ENCODE measurements at regions of chr4 and their contacts with region 1.

Region 1: DNA sequence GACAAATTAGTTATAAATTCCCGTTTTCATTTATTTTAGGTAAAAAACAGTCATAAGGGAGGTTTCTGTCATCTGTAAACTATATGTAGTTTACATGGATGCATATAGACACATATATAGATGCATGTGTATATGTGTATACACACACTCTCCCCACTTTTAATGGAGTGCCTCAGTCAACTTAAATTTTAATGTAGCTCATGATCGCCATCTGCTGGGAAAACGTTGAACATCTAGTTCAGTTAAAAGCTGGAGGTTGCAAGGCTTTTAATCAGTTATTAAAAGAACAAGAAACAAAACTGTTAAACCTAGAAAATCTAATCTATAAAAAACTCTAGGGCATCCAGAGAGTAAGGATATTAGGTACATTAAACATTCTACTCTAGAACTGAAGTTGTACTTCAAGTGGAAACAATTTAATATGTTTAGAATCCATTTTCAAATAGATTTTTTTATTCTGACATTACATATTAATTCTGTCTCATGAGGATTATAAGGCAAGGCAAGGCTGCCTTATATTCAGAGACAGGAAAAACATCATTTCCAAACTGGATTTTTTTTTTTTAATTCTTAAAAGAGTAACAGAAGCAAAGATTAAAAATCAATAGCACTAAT is 122.6 kb downstream of the SHISA3 start:
- DNase-seq: peak; percentile 23
- CTCF ChIP-seq: peak; percentile 61

Region 2: DNA sequence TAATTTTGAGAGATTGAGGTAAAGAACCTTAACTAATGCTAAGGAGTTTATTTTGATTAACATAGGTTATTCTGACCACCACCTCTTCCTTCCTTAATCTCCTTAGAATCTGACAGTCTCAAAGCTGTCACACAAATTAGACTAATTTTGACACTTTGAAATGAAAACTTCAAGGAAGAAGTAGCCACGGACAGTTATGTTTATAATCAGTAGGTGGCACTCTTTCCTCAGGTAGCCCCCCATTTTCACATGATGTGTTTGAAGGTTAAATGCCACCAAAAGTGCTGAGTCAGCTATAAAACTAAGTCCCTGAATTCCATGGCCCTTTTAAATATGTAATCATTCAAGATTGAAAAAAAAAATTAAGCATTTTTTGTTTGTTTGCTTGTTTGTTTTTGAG is 562.3 kb before region 1 on chr4:
- CTCF ChIA-PET with region 1: interaction called, 11 read pairs
- POLR2A ChIA-PET with region 1: no interaction called
- DNase-seq: peak; percentile 50
- CTCF ChIP-seq: peak; percentile 50

Region 3: GRCh38 chr4:42282081-42282901 is 237.6 kb before region 1 on chr4:
- CTCF ChIA-PET with region 1: interaction called, 77 read pairs
- POLR2A ChIA-PET with region 1: no interaction called
- DNase-seq: peak; percentile 76
- CTCF ChIP-seq: peak; percentile 63

Region 4: GRCh38 chr4:42371306-42372252 is 148.3 kb before region 1 on chr4:
- CTCF ChIA-PET with region 1: interaction called, 119 read pairs
- POLR2A ChIA-PET with region 1: no interaction called
- DNase-seq: peak; percentile 55
- CTCF ChIP-seq: peak; percentile 51

Region 5: DNA sequence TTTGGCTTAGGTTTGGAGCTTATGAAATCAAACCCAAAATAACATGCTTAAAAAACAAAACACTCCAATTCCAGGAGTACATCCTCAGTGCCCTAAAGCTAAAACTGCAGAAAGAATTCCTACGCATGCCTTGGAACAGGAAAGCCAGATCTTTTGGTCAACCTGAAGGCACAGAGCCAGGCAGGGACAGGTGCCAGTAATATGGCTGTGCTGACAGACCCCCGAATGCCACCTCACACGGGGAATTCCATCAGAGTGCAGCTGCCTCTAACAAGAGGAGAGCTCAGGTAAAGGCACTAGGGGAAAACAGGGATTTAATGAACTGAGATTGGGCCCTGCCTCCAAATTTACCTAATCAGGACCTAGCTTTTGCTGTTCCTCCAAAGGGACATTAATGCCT is 45.5 kb before region 1 on chr4:
- CTCF ChIA-PET with region 1: no interaction called
- POLR2A ChIA-PET with region 1: no interaction called
- DNase-seq: no peak
- CTCF ChIP-seq: no peak

Region 6: DNA sequence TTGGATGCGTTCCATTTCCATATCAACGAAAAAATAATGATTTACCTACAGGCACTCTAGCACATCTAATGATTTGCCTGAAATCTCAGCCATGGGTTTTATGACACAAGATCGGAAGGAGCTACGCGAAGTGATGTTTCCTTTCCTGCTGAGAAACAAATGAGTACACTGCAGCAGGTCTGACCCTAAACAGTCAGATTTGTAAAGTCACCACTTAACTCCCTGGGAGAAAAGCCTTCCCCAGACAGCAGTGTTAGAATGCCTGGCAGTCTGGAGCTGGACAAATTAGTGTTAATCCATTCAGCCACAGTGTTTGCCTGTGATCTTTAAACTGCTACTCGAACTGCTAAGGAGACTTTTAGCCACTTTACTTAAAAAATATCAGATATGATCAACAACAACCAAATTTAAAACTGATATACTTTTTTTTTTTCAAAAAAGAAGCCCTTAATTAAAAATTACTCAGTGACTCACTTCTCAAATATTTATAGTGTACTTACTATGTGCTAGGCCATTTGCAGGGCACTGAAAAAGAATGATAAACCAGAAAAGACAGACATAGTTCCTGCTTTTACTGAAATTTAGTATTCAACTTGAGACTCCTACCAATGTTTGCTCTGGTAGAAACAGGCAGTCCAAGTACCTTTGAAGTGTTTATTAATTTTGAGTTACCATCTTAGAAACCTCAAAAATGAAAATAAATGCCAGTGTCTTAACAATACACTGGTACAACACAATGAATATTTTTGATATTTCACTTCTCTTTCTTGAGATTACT is 18.1 kb before region 1 on chr4:
- CTCF ChIA-PET with region 1: interaction called, 70 read pairs
- POLR2A ChIA-PET with region 1: no interaction called
- DNase-seq: no peak
- CTCF ChIP-seq: no peak

Region 7: GRCh38 chr4:42533042-42533441 is 13.1 kb after region 1 on chr4:
- CTCF ChIA-PET with region 1: interaction called, 13 read pairs
- POLR2A ChIA-PET with region 1: no interaction called
- DNase-seq: no peak
- CTCF ChIP-seq: no peak

Region 8: GRCh38 chr4:42574870-42575430 is 55.0 kb after region 1 on chr4:
- CTCF ChIA-PET with region 1: no interaction called
- POLR2A ChIA-PET with region 1: no interaction called
- DNase-seq: no peak
- CTCF ChIP-seq: no peak

Region 9: DNA sequence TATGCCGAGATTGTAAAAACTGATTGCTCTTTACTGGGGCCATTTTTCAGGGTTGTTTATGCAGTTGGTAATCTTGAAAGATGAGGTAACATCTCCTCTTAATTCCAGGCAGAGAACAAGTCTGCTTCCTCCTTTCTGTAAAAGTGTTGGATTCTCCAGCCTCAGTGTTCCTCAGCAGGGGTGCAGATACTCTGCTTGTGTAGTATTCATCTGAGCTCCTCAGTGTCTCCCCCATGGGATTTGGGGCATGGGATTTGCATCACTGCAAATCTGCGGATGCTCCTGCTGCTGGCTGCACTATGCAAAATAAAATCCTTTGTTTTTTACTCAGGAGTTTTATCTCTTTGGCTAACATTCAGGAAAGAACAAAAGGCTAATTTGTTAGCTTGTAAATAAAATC is 241.9 kb after region 1 on chr4:
- CTCF ChIA-PET with region 1: no interaction called
- POLR2A ChIA-PET with region 1: no interaction called
- DNase-seq: no peak
- CTCF ChIP-seq: no peak

Region 10: GRCh38 chr4:42824278-42824970 is 304.5 kb after region 1 on chr4:
- CTCF ChIA-PET with region 1: no interaction called
- POLR2A ChIA-PET with region 1: no interaction called
- DNase-seq: no peak
- CTCF ChIP-seq: no peak

Measured in GM10248 (cell line).